K562 (cell line): ENCODE measurements at regions of chr1 and their contacts with region 1.

Region 1: GRCh38 chr1:36385410-36386257 is at the start of gene STK40:
- DNase-seq: peak; percentile 97 to 100 (median 98)
- ATAC-seq: peak; percentile 88
- H3K4me3 ChIP-seq: peak within 1 kb of the TSS; percentile 91
- H3K27ac ChIP-seq: peak within 1 kb of the TSS; percentile 99
- H3K4me1 ChIP-seq: peaks cover 29 to 33% of the 10 kb centered on the region in 2 experiments
- H3K27me3 ChIP-seq: no peaks in the 10 kb centered on the region
- CTCF ChIP-seq: no peak; a peak in 1 of 6 replicates
- EP300 ChIP-seq: no peak
- POLR2A ChIP-seq: no peak
- RAD21 ChIP-seq: no peak
- polyA plus RNA-seq, gene STK40: 0.69 to 1.7 TPM

Region 2: DNA sequence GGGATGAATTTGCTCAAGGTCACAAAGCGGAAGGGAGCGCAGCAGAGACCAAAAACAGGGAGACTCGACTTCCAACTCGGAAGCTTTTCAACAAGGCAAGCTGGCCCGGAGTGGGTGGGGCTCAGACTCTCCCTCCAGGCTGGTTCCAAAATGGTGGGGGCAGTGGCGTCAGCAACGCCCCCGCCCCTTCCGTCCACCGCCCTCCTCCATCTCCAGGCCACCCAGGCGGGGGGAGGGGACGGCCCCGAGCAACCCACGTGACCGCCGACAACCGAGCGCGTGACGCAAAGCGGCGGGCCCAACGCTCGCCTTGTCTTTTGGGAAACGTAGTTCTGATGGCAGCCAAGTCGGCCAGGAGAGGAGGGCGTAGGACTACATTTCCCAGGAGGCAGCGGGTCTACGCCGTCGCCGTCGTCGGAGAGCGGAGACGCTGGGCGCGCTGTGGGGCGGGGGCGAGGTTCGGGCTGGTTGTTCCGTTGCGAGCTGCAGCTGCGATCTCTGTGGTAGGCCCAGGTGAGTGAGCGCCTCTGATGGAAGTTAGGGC is 161.6 kb before region 1 on chr1 and contains the start of gene THRAP3:
- CTCF ChIA-PET with region 1: no interaction called
- POLR2A ChIA-PET with region 1: interaction called, 31 read pairs
- in situ Hi-C with region 1: no loop called
- intact Hi-C with region 1: no loop called
- DNase-seq: peak; percentile 98 to 100 (median 98)
- ATAC-seq: peak; percentile 94
- H3K4me3 ChIP-seq: peak within 1 kb of the TSS; percentile 75
- H3K27ac ChIP-seq: peak within 1 kb of the TSS; percentile 93
- H3K4me1 ChIP-seq: peaks cover 14 to 15% of the 10 kb centered on the region in 2 experiments
- H3K27me3 ChIP-seq: no peaks in the 10 kb centered on the region
- CTCF ChIP-seq: 0 out of 6 replicates have a peak, but pooled peaks of 1 of the 3 experiments have one; percentile 7
- EP300 ChIP-seq: peak; percentile 40; the same call in 1 of the 2 replicates
- POLR2A ChIP-seq: peak; percentile 96
- RAD21 ChIP-seq: no peak
- polyA plus RNA-seq, gene THRAP3: 66.2 to 135 TPM

Region 3: GRCh38 chr1:36323597-36324352 is 61.9 kb before region 1 on chr1 and contains the start of gene EVA1B:
- CTCF ChIA-PET with region 1: no interaction called
- POLR2A ChIA-PET with region 1: interaction called, 10 read pairs
- in situ Hi-C with region 1: no loop called
- intact Hi-C with region 1: loop called (anchors 5 kb)
- DNase-seq: peak; percentile 89 to 91 (median 90)
- ATAC-seq: peak; percentile 31
- H3K4me3 ChIP-seq: peak within 1 kb of the TSS; percentile 61
- H3K27ac ChIP-seq: peak within 1 kb of the TSS; percentile 62
- H3K4me1 ChIP-seq: peaks cover 39 to 73% of the 10 kb centered on the region in 2 experiments
- H3K27me3 ChIP-seq: no peaks in the 10 kb centered on the region
- CTCF ChIP-seq: no peak
- EP300 ChIP-seq: no peak
- POLR2A ChIP-seq: no peak; the same call in 1 of the 2 replicates
- RAD21 ChIP-seq: no peak
- polyA plus RNA-seq, gene EVA1B: 0.08 to 0.13 TPM

Region 4: GRCh38 chr1:36397378-36398230 is 12.0 kb after region 1 on chr1 and contains the start of gene LSM10:
- CTCF ChIA-PET with region 1: no interaction called
- POLR2A ChIA-PET with region 1: interaction called, 315 read pairs
- in situ Hi-C with region 1: no loop called
- intact Hi-C with region 1: loop called (anchors 1 kb)
- DNase-seq: peak; percentile 88 to 98 (median 92)
- ATAC-seq: peak; percentile 89
- H3K4me3 ChIP-seq: peak within 1 kb of the TSS; percentile 71
- H3K27ac ChIP-seq: peak within 1 kb of the TSS; percentile 89
- H3K4me1 ChIP-seq: peaks cover 24 to 45% of the 10 kb centered on the region in 2 experiments
- H3K27me3 ChIP-seq: no peaks in the 10 kb centered on the region
- CTCF ChIP-seq: 0 out of 6 replicates have a peak, but pooled peaks of 1 of the 3 experiments have one; percentile 1
- EP300 ChIP-seq: no peak
- POLR2A ChIP-seq: peak; percentile 98
- RAD21 ChIP-seq: peak in 1 of 2 experiments; percentile 34; a peak in 3 of 4 replicates
- polyA plus RNA-seq, gene LSM10: 34.8 to 56.9 TPM

Region 5: DNA sequence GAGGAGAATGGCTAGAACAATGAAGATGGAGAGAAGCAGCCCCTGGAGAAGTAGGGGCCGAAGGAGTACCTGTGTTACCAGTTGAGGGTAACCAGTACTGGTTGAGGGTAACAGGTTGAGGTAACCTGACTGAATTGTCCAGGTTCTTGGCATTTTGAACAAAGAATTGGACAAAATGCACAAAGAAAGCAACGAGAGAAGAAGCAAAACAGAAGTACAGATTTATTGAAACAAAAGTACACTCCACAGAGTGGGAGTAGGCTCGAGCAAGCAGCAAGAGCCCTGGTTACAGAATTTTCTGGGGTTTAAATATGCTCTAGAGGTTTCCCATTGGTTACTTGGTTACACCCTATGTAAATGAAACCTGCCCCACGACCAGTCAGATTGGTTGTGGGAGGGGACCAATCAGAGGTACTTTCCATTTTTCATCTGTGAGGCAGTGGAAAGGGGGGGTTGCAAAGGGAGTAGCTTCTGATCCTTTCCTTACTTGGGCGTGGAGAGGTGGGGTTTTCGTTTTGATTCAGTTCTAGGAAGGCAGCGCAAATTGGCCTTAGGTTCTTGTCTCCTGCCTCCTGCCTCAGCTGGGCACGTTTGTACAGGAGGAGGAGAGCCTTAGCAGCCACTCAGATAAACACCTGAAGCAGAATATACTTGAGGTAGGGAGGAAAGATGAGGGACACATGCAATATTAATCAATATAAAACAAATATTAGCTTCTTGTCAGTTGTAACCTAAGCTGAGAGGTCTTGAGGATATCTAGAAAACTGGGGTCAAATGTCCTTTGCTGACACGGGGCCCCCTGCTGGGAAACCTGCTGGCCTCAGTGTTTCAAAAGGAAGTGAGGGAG is 26.3 kb after region 1 on chr1:
- CTCF ChIA-PET with region 1: no interaction called
- POLR2A ChIA-PET with region 1: interaction called, 23 read pairs
- in situ Hi-C with region 1: no loop called
- intact Hi-C with region 1: no loop called
- DNase-seq: peak; percentile 60 to 88 (median 73)
- ATAC-seq: peak; percentile 99
- H3K4me3 ChIP-seq: no peak overlapping the region
- H3K27ac ChIP-seq: peak overlapping the region; percentile 22; the same call in 2 of the 3 replicates
- H3K4me1 ChIP-seq: peaks cover 7 to 8% of the 10 kb centered on the region in 2 experiments; a peak in 3 of 5 replicates
- H3K27me3 ChIP-seq: no peaks in the 10 kb centered on the region
- CTCF ChIP-seq: peak in 2 of 3 experiments; percentile 6 to 29; a peak in 1 of 6 replicates
- EP300 ChIP-seq: no peak
- POLR2A ChIP-seq: peak; percentile 51
- RAD21 ChIP-seq: peak in 1 of 2 experiments; percentile 23; a peak in 2 of 4 replicates